ENCODE measurements at regions of chr4 and their contacts with region 1.

Region 1: DNA sequence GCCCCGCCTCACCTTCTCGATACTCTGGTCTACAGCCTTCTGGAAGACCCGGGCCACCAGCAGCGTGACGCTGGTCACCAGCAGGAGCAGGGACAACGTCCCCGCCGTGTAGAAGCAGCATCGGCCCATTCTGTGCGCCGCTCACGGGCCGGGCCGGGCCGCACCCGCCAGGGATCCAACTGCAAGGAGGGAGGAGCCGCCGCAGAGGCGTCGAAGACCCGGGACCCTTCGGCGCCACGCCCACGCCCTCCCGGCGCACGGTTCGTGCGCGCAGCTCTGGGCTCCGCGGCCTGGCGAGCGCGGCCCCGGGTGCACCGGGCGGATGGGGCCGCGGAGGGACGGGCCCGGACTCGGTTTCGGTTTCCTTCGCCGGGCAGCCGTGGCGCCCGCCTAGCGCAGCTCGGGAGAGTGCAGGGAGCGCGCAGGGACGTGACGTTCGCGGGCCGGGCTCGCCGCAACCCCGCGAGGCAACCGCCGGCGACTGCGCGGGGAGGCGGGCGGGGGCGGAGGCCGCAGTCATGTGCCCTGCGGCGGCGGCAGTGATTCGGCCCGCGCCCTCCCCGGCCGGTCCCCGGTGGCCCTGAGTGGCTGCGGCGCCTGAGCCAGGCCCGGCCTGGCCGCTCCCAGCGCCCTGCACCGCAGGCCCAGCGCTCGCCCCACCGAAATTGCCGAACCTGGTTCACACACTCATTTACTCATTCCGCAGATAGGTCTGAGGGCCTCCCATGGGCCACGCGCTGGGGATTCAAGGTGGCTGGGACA is at the start of gene SCARB2:
- DNase-seq: peak; percentile 44 to 91 (median 73)
- ATAC-seq: peak; percentile 64
- H3K4me3 ChIP-seq: peak within 1 kb of the TSS; percentile 71 to 75
- H3K4me3 Mint-ChIP-seq: peak within 1 kb of the TSS; percentile 89
- H3K27ac ChIP-seq: peak within 1 kb of the TSS; percentile 85
- H3K27ac Mint-ChIP-seq: peak within 1 kb of the TSS; percentile 95
- H3K4me1 ChIP-seq: peaks cover 29% of the 10 kb centered on the region
- H3K4me1 Mint-ChIP-seq: peaks cover 59% of the 10 kb centered on the region
- H3K27me3 ChIP-seq: no peaks in the 10 kb centered on the region
- H3K27me3 Mint-ChIP-seq: no peaks in the 10 kb centered on the region
- CTCF ChIP-seq: no peak
- total RNA-seq, gene SCARB2: 33.3 to 34.4 TPM

Region 2: DNA sequence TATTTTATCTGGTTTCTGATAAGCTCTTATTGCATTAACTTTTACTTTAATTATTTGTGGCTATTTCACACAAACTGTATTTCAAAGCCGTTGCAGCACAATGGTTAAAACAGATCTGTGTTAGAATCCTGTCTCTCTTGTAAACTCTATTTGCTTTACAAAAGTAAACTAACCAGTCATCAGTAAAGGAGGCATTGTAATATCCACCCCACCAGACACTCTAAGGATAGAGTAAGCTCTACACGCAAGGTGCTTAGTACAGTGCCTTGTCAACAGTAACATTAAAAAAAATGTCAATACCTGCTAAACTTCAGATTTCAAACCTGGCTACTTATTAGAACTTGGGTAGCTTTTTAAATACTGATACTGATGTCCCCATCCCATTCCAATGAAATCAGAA is 927.8 kb before region 1 on chr4:
- CTCF ChIA-PET with region 1: no interaction called
- POLR2A ChIA-PET with region 1: no interaction called
- intact Hi-C with region 1: no loop called
- DNase-seq: no peak
- ATAC-seq: no peak
- H3K4me3 ChIP-seq: no peak overlapping the region
- H3K4me3 Mint-ChIP-seq: no peak overlapping the region
- H3K27ac ChIP-seq: no peak overlapping the region
- H3K27ac Mint-ChIP-seq: no peak overlapping the region
- H3K4me1 ChIP-seq: no peaks in the 10 kb centered on the region
- H3K4me1 Mint-ChIP-seq: no peaks in the 10 kb centered on the region
- H3K27me3 ChIP-seq: no peaks in the 10 kb centered on the region
- H3K27me3 Mint-ChIP-seq: no peaks in the 10 kb centered on the region
- CTCF ChIP-seq: no peak

Region 3: DNA sequence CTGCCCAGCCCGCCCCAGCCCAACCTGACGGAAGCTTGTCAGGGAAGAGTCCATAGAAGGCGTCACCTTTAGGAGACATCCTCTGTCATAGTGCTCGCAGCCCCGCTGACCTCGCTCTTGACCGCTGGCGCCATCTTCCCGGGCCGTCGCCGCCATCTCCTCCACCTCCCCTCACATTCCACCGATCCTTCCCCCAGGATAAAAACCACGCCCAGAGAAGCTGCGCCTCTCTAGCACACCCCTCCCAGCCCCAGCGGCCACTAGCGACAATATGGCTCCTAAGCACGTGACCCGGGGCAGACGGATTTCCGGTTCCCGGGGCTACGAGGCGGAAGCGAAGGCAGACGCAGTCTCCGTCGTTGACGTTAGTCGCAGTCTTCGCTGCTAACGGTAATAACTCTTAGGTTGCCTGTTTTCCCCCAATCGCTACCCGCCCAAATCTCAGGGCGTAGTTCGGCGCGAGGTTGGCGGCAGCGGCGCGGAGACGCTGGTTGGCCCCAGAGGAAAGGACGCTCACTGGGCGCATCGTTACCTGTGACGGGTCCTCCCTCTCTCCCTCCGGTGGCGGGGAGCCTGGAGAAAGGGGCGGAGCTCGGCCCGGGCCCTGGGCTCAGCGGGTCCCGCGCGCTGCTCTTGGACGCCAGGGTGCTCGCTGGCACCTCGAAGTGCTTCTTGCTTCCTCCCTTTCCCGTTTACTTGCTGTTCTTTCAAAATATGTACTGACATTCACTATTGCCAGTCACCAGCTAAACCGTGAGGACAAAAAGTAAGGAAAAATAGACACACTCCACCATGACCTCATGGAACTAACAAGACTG is 699.3 kb before region 1 on chr4 and contains the starts of genes RCHY1 and THAP6:
- CTCF ChIA-PET with region 1: no interaction called
- POLR2A ChIA-PET with region 1: no interaction called
- intact Hi-C with region 1: loop called in 1 of 2 experiments (anchors 1 kb)
- DNase-seq: peak; percentile 84 to 97 (median 92)
- ATAC-seq: peak; percentile 87
- H3K4me3 ChIP-seq: peak within 1 kb of the TSS; percentile 92 to 94
- H3K4me3 Mint-ChIP-seq: no peak within 1 kb of the TSS
- H3K27ac ChIP-seq: peak within 1 kb of the TSS; percentile 96 to 98
- H3K27ac Mint-ChIP-seq: peak within 1 kb of the TSS; percentile 99
- H3K4me1 ChIP-seq: peaks cover 55% of the 10 kb centered on the region
- H3K4me1 Mint-ChIP-seq: peaks cover 63% of the 10 kb centered on the region
- H3K27me3 ChIP-seq: no peaks in the 10 kb centered on the region
- H3K27me3 Mint-ChIP-seq: no peaks in the 10 kb centered on the region
- CTCF ChIP-seq: no peak
- total RNA-seq, gene RCHY1: 45.4 to 52.8 TPM
- total RNA-seq, gene THAP6: 15.3 to 16.3 TPM

Region 4: GRCh38 chr4:75989846-75990528 is 223.6 kb before region 1 on chr4:
- CTCF ChIA-PET with region 1: no interaction called
- POLR2A ChIA-PET with region 1: no interaction called
- intact Hi-C with region 1: loop called (anchors 5 to 10 kb)
- DNase-seq: peak in 2 of 9 experiments; percentile 8 to 32
- ATAC-seq: no peak
- H3K4me3 ChIP-seq: peak overlapping the region; percentile 78 to 91
- H3K4me3 Mint-ChIP-seq: peak overlapping the region; percentile 96
- H3K27ac ChIP-seq: peak overlapping the region; percentile 17 to 73
- H3K27ac Mint-ChIP-seq: peak overlapping the region; percentile 95
- H3K4me1 ChIP-seq: peaks cover 37% of the 10 kb centered on the region
- H3K4me1 Mint-ChIP-seq: peaks cover 29% of the 10 kb centered on the region
- H3K27me3 ChIP-seq: no peaks in the 10 kb centered on the region
- H3K27me3 Mint-ChIP-seq: peaks cover 1% of the 10 kb centered on the region
- CTCF ChIP-seq: no peak

Region 5: DNA sequence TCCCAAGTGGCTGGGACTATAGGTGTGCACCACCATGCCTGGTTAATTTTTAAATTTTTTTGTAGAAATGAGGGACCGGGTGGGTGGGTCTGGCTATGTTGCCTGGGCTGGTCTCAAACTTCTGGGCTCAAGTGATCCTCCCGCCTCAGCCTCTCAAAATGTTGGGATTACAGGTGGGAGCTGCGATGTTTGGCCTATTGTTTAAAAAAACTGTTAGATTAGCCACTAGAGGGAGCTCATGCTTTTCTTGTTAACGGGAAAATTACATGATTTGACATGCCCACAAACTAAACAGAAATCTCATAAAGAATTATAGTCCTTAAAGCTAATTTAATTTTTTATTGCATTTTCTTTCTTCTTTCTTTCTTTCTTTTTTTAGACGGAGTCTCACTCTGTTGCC is 217.9 kb before region 1 on chr4:
- CTCF ChIA-PET with region 1: no interaction called
- POLR2A ChIA-PET with region 1: no interaction called
- intact Hi-C with region 1: loop called (anchors 5 to 10 kb)
- DNase-seq: peak in 2 of 9 experiments; percentile 55 to 68
- ATAC-seq: no peak
- H3K4me3 ChIP-seq: no peak overlapping the region
- H3K4me3 Mint-ChIP-seq: no peak overlapping the region
- H3K27ac ChIP-seq: no peak overlapping the region
- H3K27ac Mint-ChIP-seq: no peak overlapping the region
- H3K4me1 ChIP-seq: peaks cover 6% of the 10 kb centered on the region
- H3K4me1 Mint-ChIP-seq: peaks cover 4% of the 10 kb centered on the region
- H3K27me3 ChIP-seq: no peaks in the 10 kb centered on the region
- H3K27me3 Mint-ChIP-seq: peaks cover 1% of the 10 kb centered on the region
- CTCF ChIP-seq: peak; percentile 77

Region 6: DNA sequence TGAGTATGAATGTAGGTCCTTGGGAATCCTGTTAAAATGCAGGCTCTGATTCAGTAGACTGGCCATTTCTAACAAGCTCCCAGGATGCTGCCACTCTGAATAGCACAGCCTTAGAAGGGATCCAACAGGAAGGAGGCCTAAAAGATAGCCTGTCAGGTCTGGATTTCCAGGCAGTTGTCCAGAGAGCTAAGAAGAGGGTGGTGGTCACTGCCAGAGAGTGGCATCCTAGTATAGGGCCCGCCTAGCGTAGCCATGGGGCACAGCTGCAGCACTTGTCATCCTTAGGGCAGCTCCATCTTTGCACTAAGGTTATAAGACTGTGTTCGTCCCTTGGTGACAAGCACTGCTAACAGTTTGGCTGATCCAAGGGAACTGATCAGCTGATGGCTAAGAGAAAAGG is 44.9 kb before region 1 on chr4:
- CTCF ChIA-PET with region 1: no interaction called
- POLR2A ChIA-PET with region 1: no interaction called
- intact Hi-C with region 1: no loop called
- DNase-seq: no peak
- ATAC-seq: no peak
- H3K4me3 ChIP-seq: no peak overlapping the region
- H3K4me3 Mint-ChIP-seq: no peak overlapping the region
- H3K27ac ChIP-seq: no peak overlapping the region
- H3K27ac Mint-ChIP-seq: no peak overlapping the region
- H3K4me1 ChIP-seq: no peaks in the 10 kb centered on the region
- H3K4me1 Mint-ChIP-seq: no peaks in the 10 kb centered on the region
- H3K27me3 ChIP-seq: no peaks in the 10 kb centered on the region
- H3K27me3 Mint-ChIP-seq: no peaks in the 10 kb centered on the region
- CTCF ChIP-seq: no peak

Region 7: GRCh38 chr4:76198411-76199237 is 15.0 kb before region 1 on chr4:
- CTCF ChIA-PET with region 1: interaction called, 3 read pairs
- POLR2A ChIA-PET with region 1: interaction called, 4 read pairs
- intact Hi-C with region 1: loop called in 1 of 2 experiments (anchors 1 kb)
- DNase-seq: peak in 3 of 9 experiments; percentile 31 to 49 (median 31)
- ATAC-seq: peak; percentile 45
- H3K4me3 ChIP-seq: no peak overlapping the region
- H3K4me3 Mint-ChIP-seq: peak overlapping the region; percentile 3
- H3K27ac ChIP-seq: peak overlapping the region in 1 of 2 experiments; percentile 15
- H3K27ac Mint-ChIP-seq: peak overlapping the region; percentile 71
- H3K4me1 ChIP-seq: peaks cover 37% of the 10 kb centered on the region
- H3K4me1 Mint-ChIP-seq: peaks cover 53% of the 10 kb centered on the region
- H3K27me3 ChIP-seq: no peaks in the 10 kb centered on the region
- H3K27me3 Mint-ChIP-seq: no peaks in the 10 kb centered on the region
- CTCF ChIP-seq: no peak

Region 8: GRCh38 chr4:76305971-76306881 is 92.6 kb after region 1 on chr4 and contains the start of gene STBD1:
- CTCF ChIA-PET with region 1: no interaction called
- POLR2A ChIA-PET with region 1: interaction called, 3 read pairs
- intact Hi-C with region 1: loop called in 1 of 2 experiments (anchors 2 kb)
- DNase-seq: peak in 5 of 9 experiments; percentile 24 to 60 (median 46)
- ATAC-seq: peak; percentile 46
- H3K4me3 ChIP-seq: peak within 1 kb of the TSS; percentile 61 to 87
- H3K4me3 Mint-ChIP-seq: peak within 1 kb of the TSS; percentile 78
- H3K27ac ChIP-seq: peak within 1 kb of the TSS in 1 of 2 experiments; percentile 29
- H3K27ac Mint-ChIP-seq: peak within 1 kb of the TSS; percentile 12
- H3K4me1 ChIP-seq: peaks cover 24% of the 10 kb centered on the region
- H3K4me1 Mint-ChIP-seq: peaks cover 24% of the 10 kb centered on the region
- H3K27me3 ChIP-seq: no peaks in the 10 kb centered on the region
- H3K27me3 Mint-ChIP-seq: peaks cover 4% of the 10 kb centered on the region
- CTCF ChIP-seq: no peak
- total RNA-seq, gene STBD1: not detected

Region 9: GRCh38 chr4:77146186-77147078 is 932.8 kb after region 1 on chr4:
- CTCF ChIA-PET with region 1: no interaction called
- POLR2A ChIA-PET with region 1: no interaction called
- intact Hi-C with region 1: no loop called
- DNase-seq: no peak
- ATAC-seq: no peak
- H3K4me3 ChIP-seq: no peak overlapping the region
- H3K4me3 Mint-ChIP-seq: no peak overlapping the region
- H3K27ac ChIP-seq: no peak overlapping the region
- H3K27ac Mint-ChIP-seq: peak overlapping the region; percentile 42
- H3K4me1 ChIP-seq: peaks cover 8% of the 10 kb centered on the region
- H3K4me1 Mint-ChIP-seq: peaks cover 19% of the 10 kb centered on the region
- H3K27me3 ChIP-seq: no peaks in the 10 kb centered on the region
- H3K27me3 Mint-ChIP-seq: no peaks in the 10 kb centered on the region
- CTCF ChIP-seq: no peak